ENCODE measurements at regions of chrX and their contacts with region 1.

Region 1: GRCh38 chrX:43836435-43837184 is 45.6 kb downstream of the MAOB start:
- DNase-seq: no peak
- ATAC-seq: no peak

Region 2: GRCh38 chrX:43573441-43574015 is 263.1 kb before region 1 on chrX:
- intact Hi-C with region 1: no loop called
- DNase-seq: no peak
- ATAC-seq: no peak

Region 3: DNA sequence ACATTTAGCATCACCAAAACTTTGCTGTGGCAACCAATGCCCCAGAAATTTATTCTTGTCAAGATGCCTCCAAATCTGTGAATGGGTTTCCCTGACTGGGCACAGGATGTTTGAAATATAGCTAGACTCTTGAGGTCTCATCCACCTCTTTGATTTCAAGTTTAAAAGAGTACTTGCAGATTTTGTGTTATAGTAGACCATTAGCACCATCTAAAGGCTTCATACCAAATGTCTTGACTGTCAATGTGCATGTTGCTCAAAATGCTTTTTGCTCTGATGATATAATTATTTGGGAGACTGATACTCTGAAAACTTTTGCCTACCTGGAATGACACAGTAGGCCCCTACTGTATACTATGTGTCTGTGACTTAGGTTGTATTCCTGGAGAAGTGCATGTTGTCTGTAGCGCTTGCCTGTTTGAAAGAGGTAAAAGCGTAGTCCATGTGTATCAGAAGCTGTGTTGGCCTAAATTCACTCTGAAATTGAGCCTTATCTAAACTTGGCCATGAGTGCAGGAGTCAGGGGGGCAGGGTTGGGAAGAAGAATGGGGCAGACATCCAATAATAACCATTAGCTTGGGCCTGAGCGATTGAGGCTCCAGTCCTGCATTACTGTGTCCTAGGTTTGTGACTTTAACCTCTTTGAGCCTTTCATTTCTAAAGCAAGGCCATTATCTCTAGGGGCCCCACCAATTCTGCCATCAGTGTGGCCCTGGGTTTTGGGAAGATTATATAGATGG is 102.7 kb after region 1 on chrX:
- intact Hi-C with region 1: loop called (anchors 5 kb)
- DNase-seq: no peak
- ATAC-seq: peak; percentile 60